GM10248 (cell line): ENCODE measurements at regions of chr15 and their contacts with region 1.

Region 1: DNA sequence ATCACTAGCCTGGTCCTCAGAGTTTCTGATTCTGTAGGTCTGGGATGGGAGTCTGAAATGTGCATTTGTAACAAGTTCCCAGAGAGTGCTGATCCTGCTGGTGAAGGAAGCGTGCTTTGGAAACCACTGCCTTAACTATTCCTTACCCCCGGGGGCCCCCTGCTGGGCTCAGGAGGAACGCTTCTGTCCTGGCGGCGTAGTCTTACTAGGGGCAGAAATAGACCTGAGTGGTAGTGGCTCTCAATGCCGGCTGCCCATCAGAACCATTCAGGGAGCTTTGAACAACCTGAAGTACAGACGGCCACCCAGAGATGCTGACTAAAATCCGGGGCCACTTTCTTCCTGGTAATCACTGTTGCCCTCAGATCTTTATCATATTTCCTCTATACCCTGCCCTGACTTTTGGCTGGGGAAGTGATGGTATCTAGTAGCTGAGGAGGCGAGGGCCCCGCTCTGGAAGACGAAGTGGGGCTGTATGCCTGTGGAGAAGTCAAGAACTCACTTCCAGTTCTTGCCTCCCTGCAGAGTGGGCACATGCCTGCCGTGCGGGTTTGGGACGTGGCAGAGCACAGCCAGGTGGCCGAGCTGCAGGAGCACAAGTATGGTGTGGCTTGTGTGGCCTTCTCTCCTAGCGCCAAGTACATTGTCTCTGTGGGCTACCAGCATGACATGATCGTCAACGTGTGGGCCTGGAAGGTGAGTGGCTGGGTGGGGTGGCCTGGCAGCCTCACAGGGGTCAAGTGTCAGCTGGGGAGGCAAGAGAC is 16.3 kb upstream of the JMJD7 start:
- DNase-seq: peak; percentile 86
- CTCF ChIP-seq: peak; percentile 91

Region 2: DNA sequence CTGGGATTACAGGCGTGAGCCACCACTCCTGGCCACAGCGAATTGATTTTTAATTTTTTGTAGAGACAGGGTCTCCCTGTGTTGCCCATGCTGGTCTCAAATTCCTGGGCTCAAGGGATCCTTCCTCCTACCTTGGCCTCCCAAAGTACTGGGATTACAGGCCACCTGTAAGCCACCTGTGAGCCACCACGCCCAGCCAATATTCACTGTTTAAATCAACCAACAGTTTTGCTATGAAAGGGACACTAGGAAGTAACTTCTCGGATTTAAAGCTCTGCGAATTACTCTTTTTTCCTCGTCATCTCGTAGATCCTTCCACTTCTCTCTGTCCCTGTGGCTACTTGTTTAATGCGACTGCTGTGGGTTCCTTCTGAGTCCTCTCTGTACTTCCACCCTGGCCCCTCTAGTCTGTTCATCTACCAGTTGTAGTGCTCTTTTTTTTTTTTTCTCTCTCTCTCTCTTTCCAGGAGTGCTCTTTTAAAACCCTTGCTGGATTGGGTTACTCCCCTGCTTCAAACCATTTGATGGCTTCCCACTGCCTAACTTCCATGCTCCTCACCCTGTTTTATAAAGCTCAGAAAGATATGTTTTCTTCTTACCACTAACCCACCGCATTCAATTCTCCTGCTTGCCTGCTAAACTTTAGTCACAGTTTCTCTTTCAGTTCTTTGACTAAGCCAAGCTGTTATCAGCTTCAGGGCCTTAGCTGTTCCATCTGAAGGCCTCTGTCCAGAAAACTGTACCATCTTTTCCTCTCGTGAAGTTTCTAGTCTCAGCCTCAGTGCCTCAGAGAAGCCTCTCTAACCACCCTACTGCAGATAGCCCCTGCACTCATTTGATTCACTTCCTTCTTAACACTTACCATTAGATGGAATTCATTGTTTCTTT is 382.4 kb before region 1 on chr15:
- CTCF ChIA-PET with region 1: no interaction called
- POLR2A ChIA-PET with region 1: no interaction called
- DNase-seq: peak; percentile 60
- CTCF ChIP-seq: no peak

Region 3: DNA sequence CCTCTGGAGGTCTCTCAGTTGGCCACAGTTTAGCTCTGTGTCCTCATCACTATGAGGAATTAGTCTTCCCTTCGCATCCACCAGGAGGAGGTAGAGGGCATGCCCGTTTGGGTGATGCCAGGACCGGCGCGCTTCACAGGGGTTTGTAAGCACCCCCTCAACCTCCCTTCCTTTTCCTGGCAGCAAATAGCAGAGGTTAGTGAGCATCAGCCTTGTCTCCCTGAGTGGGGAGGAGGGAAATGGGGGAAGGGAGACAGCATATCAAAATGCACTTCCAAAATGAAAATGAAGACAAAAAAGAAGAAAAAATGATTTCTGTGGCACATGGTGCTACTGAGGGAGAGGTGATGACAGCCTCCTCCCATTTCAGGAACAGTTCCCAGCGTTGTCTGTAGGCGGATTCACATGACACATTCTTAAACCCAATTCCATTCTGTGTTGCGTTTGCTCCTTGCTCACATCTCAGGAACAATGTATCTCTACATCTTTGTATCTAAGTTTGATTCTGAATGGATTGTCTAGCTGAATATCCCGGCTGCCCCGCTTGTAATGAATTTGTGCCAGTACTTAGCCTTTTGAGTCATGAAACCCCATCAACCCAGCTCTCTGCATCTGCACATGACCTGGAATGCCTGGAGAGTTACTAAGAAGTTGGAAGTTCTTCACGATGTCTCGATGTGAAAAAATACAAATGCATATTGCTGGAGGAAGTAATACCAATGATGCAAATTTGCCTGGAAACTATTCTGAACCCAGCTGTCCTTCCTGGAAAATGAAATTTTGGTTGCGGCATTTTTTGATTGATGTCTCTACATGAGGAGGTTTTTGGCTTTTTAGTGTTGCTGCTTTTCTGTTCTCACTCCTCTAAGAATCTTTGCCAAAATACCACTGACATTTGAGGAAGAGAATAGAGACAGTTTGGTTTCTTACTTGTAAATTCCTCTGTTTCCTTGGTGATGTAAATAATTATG is 207.4 kb before region 1 on chr15:
- CTCF ChIA-PET with region 1: interaction called, 39 read pairs
- POLR2A ChIA-PET with region 1: no interaction called
- DNase-seq: peak; percentile 43
- CTCF ChIP-seq: peak; percentile 60

Region 4: GRCh38 chr15:41634072-41634626 is 177.5 kb before region 1 on chr15:
- CTCF ChIA-PET with region 1: no interaction called
- POLR2A ChIA-PET with region 1: no interaction called
- DNase-seq: no peak
- CTCF ChIP-seq: no peak

Region 5: GRCh38 chr15:41790756-41791546 is 20.7 kb before region 1 on chr15:
- CTCF ChIA-PET with region 1: interaction called, 33 read pairs
- POLR2A ChIA-PET with region 1: no interaction called
- DNase-seq: no peak
- CTCF ChIP-seq: no peak

Region 6: GRCh38 chr15:41795996-41796856 is 15.4 kb before region 1 on chr15:
- CTCF ChIA-PET with region 1: interaction called, 60 read pairs
- POLR2A ChIA-PET with region 1: no interaction called
- DNase-seq: no peak
- CTCF ChIP-seq: no peak

Region 7: DNA sequence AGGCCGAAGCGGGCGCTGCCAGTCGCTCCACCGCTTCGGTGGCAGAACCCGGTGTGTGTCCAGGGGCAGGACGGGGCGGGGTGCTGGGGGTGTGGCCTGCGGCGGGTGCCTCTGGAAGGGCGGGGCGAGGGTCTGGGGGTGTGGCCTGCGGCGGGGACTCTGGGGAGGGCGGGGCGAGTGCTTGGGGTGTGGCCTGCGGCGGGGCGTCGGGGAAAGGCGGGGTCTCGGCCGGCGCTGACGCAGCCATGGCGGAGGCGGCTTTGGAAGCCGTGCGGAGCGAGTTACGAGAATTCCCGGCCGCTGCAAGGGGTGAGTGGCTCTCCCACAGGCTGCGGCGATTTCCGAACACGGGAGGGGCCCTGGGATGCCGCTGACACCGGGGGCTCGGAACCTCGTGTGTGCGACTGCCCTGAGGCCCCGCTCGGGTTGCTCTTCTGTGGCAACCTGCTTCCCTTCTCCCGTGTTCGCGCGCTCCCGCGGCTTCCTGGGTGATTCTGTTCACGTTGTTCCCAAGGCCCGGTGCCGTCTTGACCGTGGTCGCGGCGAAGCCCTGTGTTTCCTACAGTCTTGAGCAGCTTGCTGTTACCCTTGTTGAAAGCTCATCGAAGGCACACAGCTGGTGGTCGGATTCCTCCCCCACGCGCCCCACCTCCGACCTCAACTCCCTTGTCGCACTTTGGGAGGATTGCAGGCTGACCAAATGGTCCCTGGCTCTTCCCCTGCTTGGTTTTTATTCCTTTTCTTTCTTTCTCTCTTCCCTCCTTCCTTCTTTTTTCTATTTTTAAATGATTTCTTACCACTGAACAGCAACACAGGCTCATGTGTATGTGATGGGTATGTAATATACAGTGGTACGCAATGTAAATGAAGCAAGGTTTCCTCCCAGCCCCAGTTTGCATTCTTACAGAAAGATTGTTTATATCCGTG is 16.5 kb after region 1 on chr15 and contains the start of gene JMJD7:
- CTCF ChIA-PET with region 1: interaction called, 61 read pairs
- POLR2A ChIA-PET with region 1: no interaction called
- DNase-seq: peak; percentile 100
- CTCF ChIP-seq: no peak

Region 8: DNA sequence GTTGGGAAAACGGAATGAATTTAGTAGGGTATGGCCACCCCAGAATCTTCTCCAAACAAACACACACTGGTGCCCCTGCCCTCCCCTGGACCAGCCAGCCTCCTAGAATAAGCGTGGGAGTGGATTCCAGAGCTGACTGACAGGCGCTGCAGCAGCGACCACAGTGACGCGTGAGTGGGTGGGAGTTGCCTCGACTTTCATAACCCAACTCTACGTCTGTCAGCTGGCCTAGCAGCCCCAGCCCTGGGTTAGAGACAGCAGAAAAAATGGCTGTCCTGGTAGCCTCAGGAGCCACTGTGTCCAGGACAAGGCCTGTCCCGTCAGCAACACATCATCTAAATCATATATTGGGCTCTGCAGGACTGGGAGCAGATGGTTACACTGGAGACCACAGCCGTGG is 37.0 kb after region 1 on chr15:
- CTCF ChIA-PET with region 1: interaction called, 12 read pairs
- POLR2A ChIA-PET with region 1: no interaction called
- DNase-seq: no peak
- CTCF ChIP-seq: no peak